ENCODE measurements at regions of chr13 and their contacts with region 1.

Region 1: GRCh38 chr13:75308222-75308621 is 173.7 kb downstream of the TBC1D4 start:
- DNase-seq: peak; percentile 83
- H3K4me3 Mint-ChIP-seq: no peak overlapping the region
- H3K27ac Mint-ChIP-seq: peak overlapping the region; percentile 70
- H3K4me1 Mint-ChIP-seq: peaks cover 45% of the 10 kb centered on the region
- H3K27me3 Mint-ChIP-seq: no peaks in the 10 kb centered on the region

Region 2: DNA sequence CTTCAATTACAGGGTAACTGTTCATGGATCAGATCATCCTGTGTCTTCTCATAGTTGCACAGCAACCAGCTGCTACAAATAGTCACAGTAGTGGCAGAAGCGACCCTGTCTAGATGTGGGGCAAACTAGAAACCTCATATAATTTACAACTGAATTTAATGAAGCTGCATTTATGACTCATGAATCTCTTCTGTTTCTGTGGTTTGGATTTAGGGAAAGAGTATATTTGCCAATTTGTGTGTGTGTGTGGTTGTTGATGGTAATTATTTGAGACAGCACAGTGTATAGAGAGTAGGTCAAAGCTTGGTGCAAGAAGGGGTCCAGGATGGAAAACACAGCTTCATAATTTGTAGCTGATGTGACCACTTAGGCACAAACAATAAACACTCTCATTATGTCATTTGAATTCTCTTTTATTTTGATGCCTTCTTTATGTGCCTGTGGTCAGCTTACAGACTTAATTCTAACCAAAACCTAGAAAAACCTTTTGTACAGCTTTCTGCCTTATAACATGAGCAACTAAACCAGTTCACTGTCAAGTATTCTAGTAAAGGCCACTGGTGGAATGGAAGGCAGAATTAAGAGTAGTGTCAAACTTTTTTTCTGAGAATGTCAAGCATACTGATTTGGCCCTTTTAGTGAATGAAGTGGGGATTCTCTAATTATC is 44.3 kb before region 1 on chr13:
- CTCF ChIA-PET with region 1: no interaction called
- intact Hi-C with region 1: no loop called
- DNase-seq: no peak
- H3K4me3 Mint-ChIP-seq: no peak overlapping the region
- H3K27ac Mint-ChIP-seq: no peak overlapping the region
- H3K4me1 Mint-ChIP-seq: no peaks in the 10 kb centered on the region
- H3K27me3 Mint-ChIP-seq: no peaks in the 10 kb centered on the region

Region 3: GRCh38 chr13:75285310-75285709 is 22.9 kb before region 1 on chr13:
- CTCF ChIA-PET with region 1: no interaction called
- intact Hi-C with region 1: no loop called
- DNase-seq: no peak
- H3K4me3 Mint-ChIP-seq: no peak overlapping the region
- H3K27ac Mint-ChIP-seq: no peak overlapping the region
- H3K4me1 Mint-ChIP-seq: no peaks in the 10 kb centered on the region
- H3K27me3 Mint-ChIP-seq: no peaks in the 10 kb centered on the region

Region 4: DNA sequence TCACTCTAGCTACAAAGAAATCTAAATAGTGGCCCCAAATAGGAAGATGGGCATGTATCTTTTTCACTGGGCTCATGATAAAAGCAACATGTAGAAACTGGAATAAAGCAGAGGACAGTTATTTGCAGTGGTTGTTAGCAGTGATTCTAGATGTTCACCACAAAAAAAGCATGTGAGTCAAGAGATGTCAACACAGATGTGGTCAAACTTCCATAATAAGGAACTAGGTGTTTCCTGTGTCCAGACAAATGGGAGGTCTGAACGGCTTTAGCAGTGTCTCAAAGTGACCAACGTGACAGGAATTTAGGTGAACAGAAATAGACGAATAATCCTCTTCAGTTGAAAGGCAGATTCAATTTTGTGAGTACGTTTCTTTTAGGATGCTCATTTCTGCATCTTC is 11.0 kb after region 1 on chr13:
- CTCF ChIA-PET with region 1: no interaction called
- intact Hi-C with region 1: loop called (anchors 1 kb)
- DNase-seq: no peak
- H3K4me3 Mint-ChIP-seq: no peak overlapping the region
- H3K27ac Mint-ChIP-seq: no peak overlapping the region
- H3K4me1 Mint-ChIP-seq: peaks cover 57% of the 10 kb centered on the region
- H3K27me3 Mint-ChIP-seq: no peaks in the 10 kb centered on the region

Region 5: GRCh38 chr13:75357576-75358289 is 49.5 kb after region 1 on chr13:
- CTCF ChIA-PET with region 1: interaction called, 5 read pairs
- intact Hi-C with region 1: loop called (anchors 1 kb)
- DNase-seq: peak; percentile 61
- H3K4me3 Mint-ChIP-seq: no peak overlapping the region
- H3K27ac Mint-ChIP-seq: no peak overlapping the region
- H3K4me1 Mint-ChIP-seq: peaks cover 5% of the 10 kb centered on the region
- H3K27me3 Mint-ChIP-seq: no peaks in the 10 kb centered on the region

Region 6: GRCh38 chr13:75458696-75459422 is 150.6 kb after region 1 on chr13:
- CTCF ChIA-PET with region 1: no interaction called
- intact Hi-C with region 1: no loop called
- DNase-seq: no peak
- H3K4me3 Mint-ChIP-seq: no peak overlapping the region
- H3K27ac Mint-ChIP-seq: no peak overlapping the region
- H3K4me1 Mint-ChIP-seq: no peaks in the 10 kb centered on the region
- H3K27me3 Mint-ChIP-seq: peaks cover 6% of the 10 kb centered on the region

Region 7: DNA sequence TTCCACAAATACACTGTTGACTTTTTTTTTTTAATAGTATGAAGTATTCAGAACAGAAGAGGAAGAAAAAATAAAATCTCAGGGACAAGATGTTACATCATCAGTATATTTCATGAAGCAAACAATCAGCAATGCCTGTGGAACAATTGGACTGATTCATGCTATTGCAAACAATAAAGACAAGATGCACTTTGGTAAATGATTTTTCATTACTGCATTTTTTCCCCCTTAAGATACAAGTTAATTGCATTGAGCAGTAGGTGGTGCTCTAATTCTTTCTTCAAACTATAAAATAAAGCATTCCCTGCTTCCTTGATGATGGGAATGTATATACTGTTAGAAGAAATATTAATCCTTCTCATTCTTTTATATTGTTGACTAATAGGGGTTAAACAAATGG is 258.4 kb after region 1 on chr13:
- CTCF ChIA-PET with region 1: no interaction called
- intact Hi-C with region 1: no loop called
- DNase-seq: no peak
- H3K4me3 Mint-ChIP-seq: no peak overlapping the region
- H3K27ac Mint-ChIP-seq: no peak overlapping the region
- H3K4me1 Mint-ChIP-seq: no peaks in the 10 kb centered on the region
- H3K27me3 Mint-ChIP-seq: no peaks in the 10 kb centered on the region

Measured in activated naive CD4-positive, alpha-beta T cell treated with anti-CD3 and anti-CD28 coated beads for 36 hours (primary cell).